Common myeloid progenitor, CD34-positive (primary cell): ENCODE measurements at regions of chr5 and their contacts with region 1.

Region 1: GRCh38 chr5:135944967-135945560 is 9.7 kb downstream of the LECT2 start:
- DNase-seq: peak; percentile 77 to 88 (median 84)
- H3K4me3 ChIP-seq: no peak overlapping the region
- H3K27ac ChIP-seq: no peak overlapping the region
- H3K4me1 ChIP-seq: no peaks in the 10 kb centered on the region
- H3K27me3 ChIP-seq: peaks cover 2 to 25% (median 11%) of the 10 kb centered on the region in 5 experiments

Region 2: GRCh38 chr5:135690466-135690865 is 254.6 kb before region 1 on chr5:
- CTCF ChIA-PET with region 1: no interaction called
- POLR2A ChIA-PET with region 1: no interaction called
- DNase-seq: no peak
- H3K4me3 ChIP-seq: no peak overlapping the region
- H3K27ac ChIP-seq: no peak overlapping the region
- H3K4me1 ChIP-seq: no peaks in the 10 kb centered on the region
- H3K27me3 ChIP-seq: peaks cover 0 to 19% (median 0%) of the 10 kb centered on the region in 5 experiments

Region 3: GRCh38 chr5:135718151-135718550 is 226.9 kb before region 1 on chr5:
- CTCF ChIA-PET with region 1: no interaction called
- POLR2A ChIA-PET with region 1: no interaction called
- DNase-seq: peak in 2 of 3 donors; percentile 27 to 44
- H3K4me3 ChIP-seq: no peak overlapping the region
- H3K27ac ChIP-seq: no peak overlapping the region
- H3K4me1 ChIP-seq: peaks cover 0 to 2% (median 0%) of the 10 kb centered on the region in 4 experiments
- H3K27me3 ChIP-seq: peaks cover 0 to 5% (median 0%) of the 10 kb centered on the region in 5 experiments

Region 4: GRCh38 chr5:135934939-135935338 is 10.1 kb before region 1 on chr5:
- CTCF ChIA-PET with region 1: interaction called, 16 read pairs
- POLR2A ChIA-PET with region 1: no interaction called
- DNase-seq: no peak
- H3K4me3 ChIP-seq: no peak overlapping the region
- H3K27ac ChIP-seq: no peak overlapping the region
- H3K4me1 ChIP-seq: peaks cover 0 to 11% (median 5%) of the 10 kb centered on the region in 4 experiments
- H3K27me3 ChIP-seq: peaks cover 16 to 65% (median 25%) of the 10 kb centered on the region in 5 experiments